ENCODE measurements at regions of chr4 and their contacts with region 1.

Region 1: DNA sequence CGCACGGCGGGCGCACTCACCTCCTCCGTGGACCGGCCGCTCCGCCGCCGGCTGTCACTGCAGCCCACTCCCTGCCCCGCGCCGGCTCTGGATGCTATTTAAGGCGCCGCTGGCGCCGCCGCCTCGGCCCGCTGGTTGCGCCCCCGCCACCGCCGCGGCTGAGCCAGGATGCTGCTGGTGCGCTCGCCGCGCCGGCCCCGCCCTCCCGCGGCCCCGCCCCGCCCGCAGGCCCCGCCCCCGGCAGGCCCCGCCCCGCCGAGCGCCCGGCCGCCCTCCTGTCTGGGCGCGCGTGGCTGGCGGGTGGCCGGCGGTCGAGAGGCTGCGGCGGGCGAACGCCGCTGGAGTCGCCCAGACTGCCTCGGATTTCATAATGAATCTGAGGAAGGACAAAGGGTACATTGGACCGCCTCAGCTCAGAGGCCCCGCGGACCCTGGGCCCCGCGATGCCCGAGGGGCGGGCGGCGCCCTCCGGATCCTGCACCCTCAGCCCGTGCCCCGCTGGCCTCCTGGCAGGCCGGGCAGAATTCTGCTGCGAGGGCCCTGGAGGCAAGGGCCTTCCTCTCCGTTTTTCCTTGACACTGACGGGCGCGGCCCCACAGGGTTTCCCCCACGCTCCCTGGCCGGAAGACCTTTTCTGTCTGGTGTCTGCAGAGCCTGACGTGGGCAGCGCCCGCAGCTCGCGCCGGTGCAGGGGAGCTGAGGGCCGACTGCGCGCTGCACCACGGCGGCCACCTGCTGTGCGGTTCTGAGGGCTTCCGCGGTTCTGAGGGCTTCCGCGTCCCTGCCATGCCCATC is at the start of gene ACSL1:
- DNase-seq: peak; percentile 75
- H3K4me3 Mint-ChIP-seq: peak within 1 kb of the TSS; percentile 93
- H3K27ac Mint-ChIP-seq: peak within 1 kb of the TSS; percentile 96
- H3K4me1 Mint-ChIP-seq: peaks cover 56% of the 10 kb centered on the region
- H3K27me3 Mint-ChIP-seq: peaks cover 8% of the 10 kb centered on the region
- total RNA-seq, gene ACSL1: 56.7 and 61.8 TPM in 2 replicates

Region 2: GRCh38 chr4:184237612-184238011 is 588.5 kb before region 1 on chr4:
- intact Hi-C with region 1: loop called (anchors 10 kb)
- DNase-seq: peak; percentile 62
- H3K4me3 Mint-ChIP-seq: peak overlapping the region; percentile 70
- H3K27ac Mint-ChIP-seq: peak overlapping the region; percentile 97
- H3K4me1 Mint-ChIP-seq: peaks cover 59% of the 10 kb centered on the region
- H3K27me3 Mint-ChIP-seq: no peaks in the 10 kb centered on the region

Region 3: DNA sequence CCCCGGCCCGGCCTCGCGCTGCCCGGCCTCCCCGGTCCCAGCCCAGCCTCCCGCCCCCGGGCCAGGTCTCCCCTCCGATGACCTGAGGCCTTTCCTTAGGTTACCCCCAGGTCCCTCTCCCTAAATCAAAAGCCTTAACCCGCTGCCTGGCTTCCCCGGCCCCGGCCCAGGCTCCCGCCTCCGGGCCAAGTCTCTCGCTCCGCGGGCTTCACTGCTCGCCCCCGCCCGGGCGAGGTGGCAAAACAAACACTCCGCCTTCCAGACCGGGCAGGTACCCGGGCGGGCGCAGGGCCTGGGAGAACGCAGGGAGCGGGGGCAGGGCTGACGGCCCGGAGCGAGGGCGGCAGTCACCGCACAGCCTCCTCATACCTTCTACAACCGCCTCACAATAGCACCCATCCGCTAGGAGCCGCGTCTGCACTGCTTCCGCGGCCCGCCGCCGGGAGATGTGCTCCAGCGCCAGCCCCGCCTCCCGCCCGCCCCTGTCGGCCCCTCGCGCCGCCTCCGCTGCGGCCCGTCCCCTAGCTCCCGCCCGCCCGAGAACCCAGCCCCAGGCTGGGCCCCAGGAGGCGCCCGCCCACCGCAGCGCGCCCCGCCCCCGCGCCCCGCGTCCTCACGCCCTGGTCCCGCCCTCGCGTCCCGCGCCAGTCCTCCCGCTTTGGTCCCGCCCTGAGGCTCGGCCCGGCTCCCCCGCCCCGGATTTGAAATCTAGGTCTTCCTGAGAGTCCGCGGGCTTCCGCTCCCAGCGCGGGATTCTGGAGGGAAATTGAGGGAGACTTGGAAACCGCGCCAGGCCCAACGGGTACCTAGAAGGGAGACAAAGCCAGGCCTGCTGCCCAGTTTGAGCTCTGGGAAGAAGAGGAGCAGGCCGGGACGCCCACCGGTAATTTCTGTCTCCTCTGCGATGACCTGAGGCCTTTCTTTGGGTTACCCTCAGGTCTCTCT is 176.8 kb before region 1 on chr4 and contains the starts of genes CASP3 and PRIMPOL:
- intact Hi-C with region 1: loop called (anchors 1 kb)
- DNase-seq: peak; percentile 96
- H3K4me3 Mint-ChIP-seq: peak within 1 kb of the TSS; percentile 95
- H3K27ac Mint-ChIP-seq: peak within 1 kb of the TSS; percentile 91
- H3K4me1 Mint-ChIP-seq: peaks cover 59% of the 10 kb centered on the region
- H3K27me3 Mint-ChIP-seq: no peaks in the 10 kb centered on the region
- total RNA-seq, gene CASP3: 116 and 121 TPM in 2 replicates
- total RNA-seq, gene PRIMPOL: 16.4 and 19.7 TPM in 2 replicates

Region 4: DNA sequence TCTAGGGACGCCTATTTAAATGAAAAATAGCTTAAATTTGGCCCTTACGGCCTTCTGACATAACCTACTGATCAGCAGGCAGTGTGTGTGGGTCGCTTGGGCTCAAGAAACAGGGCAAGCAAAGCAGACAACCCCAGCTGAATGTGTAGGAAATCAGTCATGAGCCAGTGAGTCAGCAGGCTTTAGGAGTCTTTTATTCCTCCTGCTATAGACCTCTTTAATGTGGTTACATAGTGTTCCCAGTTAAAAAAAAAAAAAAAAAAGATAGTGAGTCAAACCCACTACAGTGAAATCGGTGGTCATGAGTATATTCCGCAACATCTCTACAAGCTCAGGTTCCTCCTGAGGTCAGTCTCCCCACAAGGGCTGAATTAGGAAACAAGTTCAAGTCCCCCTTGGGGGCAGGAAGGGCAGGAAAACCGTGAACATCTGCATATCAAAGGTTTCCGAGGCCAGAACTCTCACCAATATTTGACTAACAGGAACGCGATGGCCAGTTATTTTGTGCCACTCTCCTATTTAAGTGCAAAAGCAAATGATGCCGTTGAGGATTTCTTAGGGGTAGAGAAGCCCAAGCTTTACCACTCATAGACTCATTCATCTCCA is 33.0 kb before region 1 on chr4:
- intact Hi-C with region 1: loop called (anchors 1 kb)
- DNase-seq: no peak
- H3K4me3 Mint-ChIP-seq: peak overlapping the region; percentile 25
- H3K27ac Mint-ChIP-seq: peak overlapping the region; percentile 55
- H3K4me1 Mint-ChIP-seq: peaks cover 47% of the 10 kb centered on the region
- H3K27me3 Mint-ChIP-seq: no peaks in the 10 kb centered on the region

Region 5: DNA sequence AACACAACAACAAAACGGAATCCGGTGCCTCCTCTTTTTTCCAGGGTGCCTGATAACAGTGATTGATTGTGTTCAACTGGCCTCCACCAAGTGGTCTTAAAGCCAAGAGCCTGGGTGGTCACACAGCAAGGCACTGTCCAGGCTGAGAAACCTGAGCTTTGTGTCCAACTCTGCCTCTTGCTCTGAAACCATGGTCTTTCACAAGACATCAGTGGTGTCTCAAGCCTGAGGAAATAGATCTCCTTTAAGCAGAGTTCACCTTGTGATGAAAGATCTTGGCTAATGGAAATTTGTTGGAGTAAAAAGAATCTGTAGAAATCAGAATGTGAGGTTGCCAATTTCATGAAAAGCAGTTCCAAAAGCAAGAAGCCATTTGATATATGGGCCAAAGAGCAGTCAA is 47.0 kb after region 1 on chr4:
- intact Hi-C with region 1: no loop called
- DNase-seq: no peak
- H3K4me3 Mint-ChIP-seq: no peak overlapping the region
- H3K27ac Mint-ChIP-seq: no peak overlapping the region
- H3K4me1 Mint-ChIP-seq: peaks cover 5% of the 10 kb centered on the region
- H3K27me3 Mint-ChIP-seq: peaks cover 12% of the 10 kb centered on the region

Region 6: DNA sequence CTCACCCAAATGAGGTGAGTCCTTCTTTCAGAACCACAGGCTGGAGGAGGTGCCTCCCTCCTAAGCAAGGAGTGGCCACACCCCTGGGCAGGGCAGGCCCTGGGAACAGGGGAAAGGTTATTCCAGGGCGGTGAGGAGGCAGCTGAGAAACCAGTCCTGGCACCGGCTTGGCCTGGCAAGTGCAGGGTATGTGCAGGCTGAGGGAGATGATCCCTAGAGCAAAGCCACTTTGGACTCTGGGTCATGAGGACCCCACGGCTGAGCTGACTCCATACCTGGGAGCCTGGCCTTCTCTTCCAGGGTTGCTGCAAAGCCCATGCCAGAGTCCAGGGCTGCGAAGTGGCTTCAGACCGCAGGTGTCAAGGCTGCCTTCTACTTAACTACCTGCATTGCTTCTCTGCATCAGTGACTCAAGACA is 142.7 kb after region 1 on chr4:
- intact Hi-C with region 1: loop called (anchors 5 kb)
- DNase-seq: no peak
- H3K4me3 Mint-ChIP-seq: no peak overlapping the region
- H3K27ac Mint-ChIP-seq: no peak overlapping the region
- H3K4me1 Mint-ChIP-seq: peaks cover 4% of the 10 kb centered on the region
- H3K27me3 Mint-ChIP-seq: peaks cover 2% of the 10 kb centered on the region

Region 7: DNA sequence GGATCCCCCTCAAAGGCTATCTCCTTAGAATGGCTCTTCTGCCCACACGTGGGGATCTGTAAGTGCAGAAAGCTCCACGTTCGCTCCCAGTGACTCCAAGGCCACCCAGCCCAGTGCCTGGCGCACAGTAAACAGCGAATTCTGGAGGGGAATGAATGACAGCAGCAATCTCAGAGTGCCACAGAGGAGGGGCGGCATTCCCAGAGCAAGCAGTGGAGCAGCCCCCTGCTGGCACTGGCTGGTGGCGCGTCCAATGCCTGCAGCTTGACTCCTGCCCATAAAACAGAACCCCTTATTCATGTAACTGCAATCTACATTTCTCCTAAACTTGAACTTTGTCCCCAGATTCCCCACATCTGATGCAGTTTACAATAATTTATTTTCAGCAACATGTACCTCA is 185.3 kb after region 1 on chr4:
- intact Hi-C with region 1: no loop called
- DNase-seq: no peak
- H3K4me3 Mint-ChIP-seq: no peak overlapping the region
- H3K27ac Mint-ChIP-seq: no peak overlapping the region
- H3K4me1 Mint-ChIP-seq: peaks cover 11% of the 10 kb centered on the region
- H3K27me3 Mint-ChIP-seq: peaks cover 78% of the 10 kb centered on the region

Region 8: DNA sequence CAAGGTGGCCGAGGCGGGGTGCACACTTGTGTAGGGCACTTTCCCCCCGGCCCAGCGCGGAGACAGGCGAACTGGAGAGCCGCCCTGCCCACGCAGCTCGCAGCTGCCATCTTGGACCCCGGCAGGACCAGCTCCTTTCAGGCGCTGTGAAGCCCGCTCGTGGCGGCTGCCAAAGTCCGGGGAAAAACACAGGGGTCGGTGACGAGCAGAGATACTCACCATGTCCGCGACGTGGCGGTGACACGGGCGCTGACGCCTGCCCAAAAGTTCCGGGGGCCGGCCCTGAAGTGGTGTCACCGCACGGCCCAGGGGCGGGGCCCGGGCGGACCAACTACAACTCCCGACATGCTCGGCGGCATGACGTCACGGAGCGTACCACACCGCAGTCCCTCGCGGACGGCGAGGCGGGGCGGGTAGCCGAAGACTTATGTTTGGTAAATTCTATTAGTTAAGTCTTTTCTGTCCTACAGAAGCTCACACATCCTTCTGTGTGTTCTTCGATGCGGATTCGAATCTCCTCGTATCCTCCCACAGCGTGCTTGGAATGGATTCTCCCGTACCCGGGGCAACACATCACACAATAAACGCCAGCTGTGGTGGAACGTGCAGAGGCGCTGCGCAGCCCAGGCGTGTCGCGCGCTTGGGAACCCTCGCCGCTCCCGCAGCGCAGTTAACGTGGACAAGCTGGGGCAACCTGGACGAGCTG is 599.7 kb after region 1 on chr4 and contains the start of gene UFSP2:
- intact Hi-C with region 1: loop called (anchors 1 kb)
- DNase-seq: peak; percentile 86
- H3K4me3 Mint-ChIP-seq: peak within 1 kb of the TSS; percentile 88
- H3K27ac Mint-ChIP-seq: peak within 1 kb of the TSS; percentile 92
- H3K4me1 Mint-ChIP-seq: peaks cover 35% of the 10 kb centered on the region
- H3K27me3 Mint-ChIP-seq: peaks cover 7% of the 10 kb centered on the region
- total RNA-seq, gene UFSP2: 19.8 and 19.9 TPM in 2 replicates

Region 9: GRCh38 chr4:185640811-185641675 is 815.0 kb after region 1 on chr4:
- intact Hi-C with region 1: no loop called
- DNase-seq: no peak
- H3K4me3 Mint-ChIP-seq: no peak overlapping the region
- H3K27ac Mint-ChIP-seq: no peak overlapping the region
- H3K4me1 Mint-ChIP-seq: no peaks in the 10 kb centered on the region
- H3K27me3 Mint-ChIP-seq: peaks cover 38% of the 10 kb centered on the region